Activated naive CD4-positive, alpha-beta T cell treated with anti-CD3 and anti-CD28 coated beads for 36 hours (primary cell): ENCODE measurements at regions of chr9 and their contacts with region 1.

Region 1: GRCh38 chr9:23379842-23380241 is 446.2 kb downstream of the ELAVL2 start:
- DNase-seq: no peak
- H3K4me3 Mint-ChIP-seq: no peak overlapping the region
- H3K27ac Mint-ChIP-seq: no peak overlapping the region
- H3K4me1 Mint-ChIP-seq: no peaks in the 10 kb centered on the region
- H3K27me3 Mint-ChIP-seq: no peaks in the 10 kb centered on the region

Region 2: DNA sequence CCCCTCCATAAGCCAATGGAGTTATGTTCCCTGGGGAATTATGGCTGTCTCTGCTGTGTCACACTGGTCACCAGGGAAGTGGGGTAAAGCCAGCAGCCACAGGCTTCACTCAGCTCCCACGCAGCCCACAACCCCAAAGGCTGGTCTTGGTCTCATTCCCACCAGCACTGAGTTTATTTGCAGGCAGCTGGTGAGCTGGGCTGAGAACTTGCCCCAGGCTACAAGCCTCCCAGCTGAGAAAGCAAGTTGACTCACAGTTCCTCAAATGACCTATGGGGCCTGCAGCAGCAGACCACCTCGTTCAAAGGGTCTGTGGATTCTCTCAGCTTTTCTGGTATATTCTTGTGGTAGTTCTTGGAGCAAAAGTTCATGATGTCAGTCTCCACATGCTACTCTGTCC is 22.2 kb before region 1 on chr9:
- CTCF ChIA-PET with region 1: no interaction called
- intact Hi-C with region 1: loop called (anchors 1 kb)
- DNase-seq: no peak
- H3K4me3 Mint-ChIP-seq: no peak overlapping the region
- H3K27ac Mint-ChIP-seq: no peak overlapping the region
- H3K4me1 Mint-ChIP-seq: no peaks in the 10 kb centered on the region
- H3K27me3 Mint-ChIP-seq: no peaks in the 10 kb centered on the region